ENCODE measurements at regions of chr18 and their contacts with region 1.

Region 1: GRCh38 chr18:63439334-63439733 is 17.1 kb upstream of the VPS4B start:
- DNase-seq: peak; percentile 56
- ATAC-seq: peak; percentile 36
- H3K4me3 Mint-ChIP-seq: no peak overlapping the region
- H3K27ac Mint-ChIP-seq: no peak overlapping the region
- H3K4me1 Mint-ChIP-seq: no peaks in the 10 kb centered on the region
- H3K27me3 Mint-ChIP-seq: peaks cover 3% of the 10 kb centered on the region

Region 2: GRCh38 chr18:63267975-63268721 is 171.2 kb before region 1 on chr18:
- CTCF ChIA-PET with region 1: no interaction called
- POLR2A ChIA-PET with region 1: no interaction called
- intact Hi-C with region 1: loop called in 1 of 2 experiments (anchors 5 kb)
- DNase-seq: no peak
- ATAC-seq: peak; percentile 87
- H3K4me3 Mint-ChIP-seq: no peak overlapping the region
- H3K27ac Mint-ChIP-seq: peak overlapping the region; percentile 56
- H3K4me1 Mint-ChIP-seq: peaks cover 53% of the 10 kb centered on the region
- H3K27me3 Mint-ChIP-seq: no peaks in the 10 kb centered on the region

Region 3: DNA sequence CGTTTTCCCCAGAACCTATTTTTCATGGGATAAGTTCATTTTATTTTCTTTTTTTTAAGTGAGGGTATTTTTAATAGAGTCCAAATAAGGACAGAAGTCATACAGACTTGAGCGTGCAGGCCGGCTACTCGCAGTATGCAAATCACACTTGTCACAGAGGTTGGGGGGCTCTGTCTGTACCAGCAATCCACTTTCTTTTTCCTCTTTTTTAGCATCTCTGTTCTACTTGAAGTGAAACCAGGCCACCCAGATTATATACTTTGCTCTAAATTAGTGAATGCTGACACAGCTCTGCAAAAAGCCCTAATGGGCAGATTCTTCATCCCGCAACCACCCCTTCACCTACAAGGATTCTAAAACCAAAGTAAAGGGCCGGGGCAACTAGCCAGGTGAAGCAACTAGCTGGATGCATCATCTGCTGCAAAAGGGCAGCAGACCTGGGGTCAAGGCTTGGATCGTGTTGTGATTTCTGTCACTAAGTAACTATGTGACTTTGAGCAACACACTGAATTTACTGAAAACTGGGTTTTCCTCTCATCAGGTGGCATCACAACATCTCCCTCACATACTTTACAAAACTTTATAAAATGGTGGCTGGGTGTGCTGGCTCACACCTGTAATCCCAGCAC is 90.7 kb before region 1 on chr18:
- CTCF ChIA-PET with region 1: interaction called, 58 read pairs
- POLR2A ChIA-PET with region 1: no interaction called
- intact Hi-C with region 1: no loop called
- DNase-seq: no peak
- ATAC-seq: no peak
- H3K4me3 Mint-ChIP-seq: no peak overlapping the region
- H3K27ac Mint-ChIP-seq: no peak overlapping the region
- H3K4me1 Mint-ChIP-seq: no peaks in the 10 kb centered on the region
- H3K27me3 Mint-ChIP-seq: no peaks in the 10 kb centered on the region

Region 4: GRCh38 chr18:63422087-63422809 is 17.1 kb before region 1 on chr18 and contains the start of gene VPS4B:
- CTCF ChIA-PET with region 1: interaction called, 12 read pairs
- POLR2A ChIA-PET with region 1: interaction called, 6 read pairs
- intact Hi-C with region 1: loop called in 1 of 2 experiments (anchors 2 kb)
- DNase-seq: peak; percentile 100
- ATAC-seq: peak; percentile 95
- H3K4me3 Mint-ChIP-seq: peak within 1 kb of the TSS; percentile 99
- H3K27ac Mint-ChIP-seq: peak within 1 kb of the TSS; percentile 95
- H3K4me1 Mint-ChIP-seq: peaks cover 30% of the 10 kb centered on the region
- H3K27me3 Mint-ChIP-seq: no peaks in the 10 kb centered on the region
- total RNA-seq, gene VPS4B: 40.7 to 48.4 TPM

Region 5: DNA sequence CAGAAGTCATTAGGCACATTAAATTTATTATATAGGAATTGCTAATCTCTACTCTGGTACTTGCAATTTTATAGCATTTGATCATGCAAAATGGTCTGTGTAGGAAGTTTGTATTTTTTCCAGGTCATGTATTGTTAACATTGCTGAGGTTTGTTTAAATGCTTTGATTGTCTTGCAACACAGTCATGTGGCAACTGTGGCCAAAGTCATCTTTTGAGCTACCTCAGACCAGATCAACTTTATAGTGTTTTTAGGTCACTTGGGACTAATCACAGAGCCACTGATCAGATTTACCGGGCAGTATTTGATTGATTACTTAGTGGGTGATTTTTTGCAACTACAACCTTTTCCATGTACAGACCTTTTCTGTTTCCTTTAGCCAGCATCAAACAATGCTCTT is 41.1 kb after region 1 on chr18:
- CTCF ChIA-PET with region 1: no interaction called
- POLR2A ChIA-PET with region 1: no interaction called
- intact Hi-C with region 1: no loop called
- DNase-seq: no peak
- ATAC-seq: no peak
- H3K4me3 Mint-ChIP-seq: no peak overlapping the region
- H3K27ac Mint-ChIP-seq: no peak overlapping the region
- H3K4me1 Mint-ChIP-seq: no peaks in the 10 kb centered on the region
- H3K27me3 Mint-ChIP-seq: peaks cover 5% of the 10 kb centered on the region